GM12878 (cell line): ENCODE measurements at regions of chr10 and their contacts with region 1.

Region 1: GRCh38 chr10:89301721-89302445 is at the start of gene IFIT2:
- DNase-seq: peak; percentile 66
- ATAC-seq: peak; percentile 88
- H3K4me3 ChIP-seq: peak within 1 kb of the TSS; percentile 79
- H3K27ac ChIP-seq: peak within 1 kb of the TSS; percentile 64
- H3K4me1 ChIP-seq: peaks cover 3% of the 10 kb centered on the region
- H3K27me3 ChIP-seq: no peaks in the 10 kb centered on the region
- CTCF ChIP-seq: no peak
- EP300 ChIP-seq: no peak
- POLR2A ChIP-seq: peak; percentile 81
- RAD21 ChIP-seq: no peak
- polyA plus RNA-seq, gene IFIT2: 11.8 to 14.8 TPM

Region 2: GRCh38 chr10:89327784-89328441 is 26.0 kb after region 1 on chr10 and contains the start of gene IFIT3:
- CTCF ChIA-PET with region 1: interaction called, 6 read pairs
- POLR2A ChIA-PET with region 1: no interaction called
- RAD21 ChIA-PET with region 1: interaction called, 8 read pairs
- SMC1A ChIA-PET with region 1: interaction called, 40 read pairs
- in situ Hi-C with region 1: no loop called
- intact Hi-C with region 1: no loop called
- DNase-seq: peak; percentile 62
- ATAC-seq: peak; percentile 33
- H3K4me3 ChIP-seq: peak within 1 kb of the TSS; percentile 51
- H3K27ac ChIP-seq: peak within 1 kb of the TSS; percentile 60
- H3K4me1 ChIP-seq: peaks cover 22% of the 10 kb centered on the region
- H3K27me3 ChIP-seq: no peaks in the 10 kb centered on the region
- CTCF ChIP-seq: no peak
- EP300 ChIP-seq: no peak
- POLR2A ChIP-seq: peak; percentile 63
- RAD21 ChIP-seq: no peak
- polyA plus RNA-seq, gene IFIT3: 27.0 to 50.4 TPM

Region 3: DNA sequence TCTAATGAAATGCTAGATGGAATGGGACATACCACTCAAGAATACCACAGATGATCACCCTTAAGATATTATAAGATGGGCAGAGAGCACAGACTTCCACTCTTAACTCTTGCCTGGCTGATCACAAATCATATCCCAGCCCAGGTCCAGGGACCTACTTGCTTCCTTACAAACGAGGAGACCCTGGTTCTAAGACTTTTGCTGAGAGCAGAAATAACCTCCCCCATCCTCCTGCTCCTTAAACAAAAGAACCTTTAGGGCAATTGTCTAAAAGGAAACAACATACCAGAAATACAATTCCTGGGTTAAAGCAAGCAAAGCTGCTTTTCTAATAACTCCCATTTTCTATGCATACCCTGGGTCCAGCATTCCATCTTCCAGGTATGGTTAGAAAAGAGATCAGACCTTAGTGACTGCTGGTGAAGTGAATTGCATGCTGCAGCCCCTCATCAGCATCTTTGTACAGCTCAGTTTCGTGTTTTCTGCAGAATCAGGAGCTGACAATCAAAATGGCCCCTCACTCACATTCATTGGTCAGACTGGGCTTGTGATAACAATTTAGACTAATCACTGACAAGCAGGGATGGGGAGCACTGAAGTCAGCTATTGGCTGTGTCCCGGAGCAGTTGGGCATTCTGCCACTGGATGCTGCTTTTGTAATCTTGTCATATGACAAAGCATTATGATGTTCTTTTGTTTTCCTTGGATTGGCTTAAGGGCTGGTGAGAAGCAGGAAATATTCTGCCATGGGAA is 40.5 kb after region 1 on chr10:
- CTCF ChIA-PET with region 1: no interaction called
- POLR2A ChIA-PET with region 1: no interaction called
- RAD21 ChIA-PET with region 1: interaction called, 3 read pairs
- SMC1A ChIA-PET with region 1: interaction called, 11 read pairs
- in situ Hi-C with region 1: no loop called
- intact Hi-C with region 1: no loop called
- DNase-seq: no peak
- ATAC-seq: peak; percentile 25; the same call in 2 of the 3 replicates
- H3K4me3 ChIP-seq: no peak overlapping the region
- H3K27ac ChIP-seq: no peak overlapping the region
- H3K4me1 ChIP-seq: peaks cover 5% of the 10 kb centered on the region
- H3K27me3 ChIP-seq: no peaks in the 10 kb centered on the region
- CTCF ChIP-seq: no peak
- EP300 ChIP-seq: no peak
- POLR2A ChIP-seq: 0 out of 2 replicates have a peak, but pooled peaks have one; percentile 37
- RAD21 ChIP-seq: no peak